ENCODE measurements at regions of chr9 and their contacts with region 1.

Region 1: DNA sequence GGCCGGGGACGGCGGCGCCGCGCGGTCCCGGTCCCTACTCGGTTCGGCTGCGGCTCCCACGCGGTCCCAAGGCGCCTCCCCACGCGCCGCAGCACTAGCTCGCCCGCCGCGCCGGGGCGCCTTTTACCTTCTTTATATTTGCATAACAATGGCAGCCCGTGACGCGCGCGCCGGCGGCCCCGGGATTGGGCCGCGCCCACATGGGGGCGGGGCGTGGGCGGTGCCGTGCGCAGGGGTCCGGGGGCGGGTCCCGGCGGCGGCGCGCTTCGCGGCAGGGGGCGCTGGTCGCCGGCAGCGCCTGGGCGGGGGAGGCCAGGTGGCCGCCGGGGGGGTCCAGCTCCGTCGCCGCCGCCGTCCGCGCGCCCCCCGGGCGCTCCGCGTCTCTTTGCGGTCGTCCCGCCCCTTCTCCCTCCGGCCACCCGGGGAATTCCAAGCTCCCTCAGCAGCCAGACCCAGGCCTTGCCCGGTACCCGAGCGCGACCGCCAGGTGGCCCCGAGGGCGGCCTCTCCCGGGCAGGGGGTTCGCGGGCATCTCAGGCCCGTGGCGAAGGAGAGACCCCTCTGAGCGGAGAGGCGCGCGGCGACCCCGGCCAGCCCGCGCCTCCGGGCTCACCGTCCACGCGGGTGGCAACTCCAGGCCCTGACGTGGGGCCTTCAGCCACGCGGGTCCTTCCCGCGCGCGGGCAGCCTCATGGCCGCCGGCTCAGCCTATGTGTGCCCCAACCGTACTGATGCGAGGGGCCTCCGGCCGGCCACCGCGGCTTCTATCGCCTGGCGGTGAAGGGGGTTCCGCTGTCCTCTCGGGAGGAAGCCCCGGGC is at the start of gene NRARP:
- DNase-seq: peak; percentile 77 to 89
- ATAC-seq: peak; percentile 54 to 61
- H3K4me3 ChIP-seq: peak within 1 kb of the TSS; percentile 49
- H3K27ac ChIP-seq: peak within 1 kb of the TSS; percentile 58 to 90
- H3K4me1 ChIP-seq: peaks cover 19% of the 10 kb centered on the region
- CTCF ChIP-seq: peak; percentile 90
- EP300 ChIP-seq: no peak
- POLR2A ChIP-seq: peak; percentile 97
- RAD21 ChIP-seq: peak; percentile 16 to 40; a peak in 3 of 5 replicates
- polyA plus RNA-seq, gene NRARP: 3.2 and 5.1 TPM in 2 replicates

Region 2: DNA sequence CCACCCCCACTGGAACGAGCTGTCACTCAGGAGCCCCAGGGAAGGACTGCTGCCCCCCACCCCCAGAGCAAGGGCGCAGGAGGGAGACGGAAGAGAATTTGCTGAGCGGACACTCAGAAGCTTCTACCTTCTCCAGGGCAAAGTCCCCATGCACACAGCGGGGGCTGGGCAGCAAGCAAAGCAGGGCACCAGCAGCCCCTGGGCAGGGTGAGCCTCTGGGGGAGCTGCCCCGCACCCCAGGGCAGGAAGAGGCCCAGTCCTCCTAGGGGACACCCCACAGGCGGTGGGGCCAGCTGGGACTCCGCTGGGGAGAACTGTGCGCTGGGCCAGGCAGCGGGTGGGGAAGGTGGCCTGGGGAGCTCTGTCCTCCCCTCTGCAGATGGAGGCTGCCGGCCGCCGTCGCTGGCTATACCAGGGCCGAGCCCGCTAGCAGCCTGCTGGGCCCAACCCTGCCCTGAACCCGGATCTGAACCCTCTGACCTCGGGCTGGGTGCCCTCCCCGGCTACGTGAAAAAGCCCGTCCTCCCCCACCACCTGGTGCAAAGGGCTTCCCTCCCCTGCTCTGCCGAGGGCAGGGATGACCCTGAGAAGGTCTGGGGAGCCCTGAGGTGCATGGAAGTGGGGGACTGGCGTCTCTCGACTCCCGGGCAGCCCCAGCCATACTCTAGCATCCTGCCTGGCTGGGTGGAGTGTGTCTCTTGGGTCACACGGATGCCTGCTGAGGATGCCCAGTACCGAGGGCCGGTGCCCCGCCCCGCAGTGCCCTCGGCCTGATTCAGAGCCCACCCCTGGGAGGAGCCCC is 72.3 kb before region 1 on chr9:
- CTCF ChIA-PET with region 1: no interaction called
- POLR2A ChIA-PET with region 1: no interaction called
- DNase-seq: no peak
- ATAC-seq: peak in 1 of 2 experiments; percentile 23; a peak in 3 of 6 replicates
- H3K4me3 ChIP-seq: no peak overlapping the region
- H3K27ac ChIP-seq: peak overlapping the region in 1 of 2 experiments; percentile 49; a peak in 2 of 6 replicates
- H3K4me1 ChIP-seq: peaks cover 48% of the 10 kb centered on the region
- CTCF ChIP-seq: no peak
- EP300 ChIP-seq: no peak
- POLR2A ChIP-seq: no peak
- RAD21 ChIP-seq: no peak

Region 3: GRCh38 chr9:137277329-137278041 is 24.9 kb before region 1 on chr9 and contains the start of gene TOR4A:
- CTCF ChIA-PET with region 1: interaction called, 13 read pairs
- POLR2A ChIA-PET with region 1: interaction called, 13 read pairs
- DNase-seq: peak; percentile 89 to 92
- ATAC-seq: peak; percentile 79 to 89
- H3K4me3 ChIP-seq: peak within 1 kb of the TSS; percentile 72
- H3K27ac ChIP-seq: peak within 1 kb of the TSS; percentile 94 to 96
- H3K4me1 ChIP-seq: peaks cover 35% of the 10 kb centered on the region
- CTCF ChIP-seq: peak; percentile 33; the same call in 1 of the 3 replicates
- EP300 ChIP-seq: peak in 1 of 2 experiments; percentile 15; a peak in 1 of 5 replicates
- POLR2A ChIP-seq: peak; percentile 56
- RAD21 ChIP-seq: peak in 1 of 2 experiments; percentile 29; a peak in 3 of 5 replicates
- polyA plus RNA-seq, gene TOR4A: 8.7 and 9.8 TPM in 2 replicates

Region 4: GRCh38 chr9:137286975-137287383 is 15.4 kb before region 1 on chr9:
- CTCF ChIA-PET with region 1: interaction called, 14 read pairs
- POLR2A ChIA-PET with region 1: interaction called, 3 read pairs
- DNase-seq: peak; percentile 88 to 94
- ATAC-seq: peak; percentile 99 to 100
- H3K4me3 ChIP-seq: no peak overlapping the region
- H3K27ac ChIP-seq: no peak overlapping the region
- H3K4me1 ChIP-seq: peaks cover 7% of the 10 kb centered on the region; the same call in 1 of the 3 replicates
- CTCF ChIP-seq: peak; percentile 54
- EP300 ChIP-seq: no peak
- POLR2A ChIP-seq: no peak
- RAD21 ChIP-seq: peak; percentile 59 to 86

Region 5: GRCh38 chr9:137316012-137316976 is 13.9 kb after region 1 on chr9:
- CTCF ChIA-PET with region 1: interaction called, 17 read pairs
- POLR2A ChIA-PET with region 1: interaction called, 11 read pairs
- DNase-seq: peak; percentile 75 to 76
- ATAC-seq: peak; percentile 22 to 50; a peak in 4 of 6 replicates
- H3K4me3 ChIP-seq: peak overlapping the region; percentile 45
- H3K27ac ChIP-seq: peak overlapping the region; percentile 88 to 96
- H3K4me1 ChIP-seq: peaks cover 30% of the 10 kb centered on the region
- CTCF ChIP-seq: no peak
- EP300 ChIP-seq: no peak
- POLR2A ChIP-seq: no peak
- RAD21 ChIP-seq: no peak

Region 6: DNA sequence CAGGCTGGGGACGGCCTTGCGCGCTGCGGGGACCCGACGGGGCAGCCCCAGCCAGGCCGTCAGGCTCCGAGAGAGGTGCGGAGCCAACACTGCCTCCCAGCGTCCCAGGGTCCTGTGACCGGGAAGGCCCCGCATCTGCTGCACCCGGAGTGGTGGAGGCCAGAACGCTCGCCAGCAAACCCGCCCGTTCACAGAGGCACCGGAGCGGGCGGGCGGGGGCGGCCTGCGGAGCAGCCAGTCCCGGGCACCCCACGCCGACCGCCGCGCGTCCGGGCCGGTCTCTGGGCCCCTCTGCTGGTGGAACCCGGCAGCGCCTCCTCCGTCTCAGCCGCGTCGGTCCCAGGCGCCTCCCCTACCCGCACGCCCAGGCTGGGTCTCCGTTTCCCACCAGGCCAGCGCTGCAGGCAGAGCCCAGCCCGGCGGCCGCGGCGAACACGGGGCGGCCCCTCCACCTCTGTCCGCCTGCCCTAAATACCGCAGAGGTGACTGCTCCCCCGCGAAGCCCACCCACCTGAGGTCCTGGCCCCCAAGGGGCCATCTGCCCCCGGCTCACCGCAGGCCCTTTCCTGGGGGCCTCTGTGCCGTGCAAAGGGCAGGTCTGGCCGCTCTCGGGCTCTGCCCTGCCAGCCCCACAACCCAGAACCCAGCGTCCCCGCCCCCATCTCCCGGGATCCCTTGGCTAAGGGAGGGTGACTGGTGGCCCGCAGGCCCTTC is 104.6 kb after region 1 on chr9:
- CTCF ChIA-PET with region 1: interaction called, 51 read pairs
- POLR2A ChIA-PET with region 1: interaction called, 13 read pairs
- DNase-seq: peak; percentile 60 to 64
- ATAC-seq: peak; percentile 77 to 90
- H3K4me3 ChIP-seq: peak overlapping the region; percentile 35
- H3K27ac ChIP-seq: peak overlapping the region; percentile 58 to 82; a peak in 5 of 6 replicates
- H3K4me1 ChIP-seq: peaks cover 31% of the 10 kb centered on the region
- CTCF ChIP-seq: peak; percentile 72
- EP300 ChIP-seq: no peak
- POLR2A ChIP-seq: no peak
- RAD21 ChIP-seq: peak; percentile 69 to 87; a peak in 4 of 5 replicates

Region 7: GRCh38 chr9:137445275-137445807 is 143.0 kb after region 1 on chr9:
- CTCF ChIA-PET with region 1: interaction called, 25 read pairs
- POLR2A ChIA-PET with region 1: no interaction called
- DNase-seq: peak; percentile 75 to 77
- ATAC-seq: peak; percentile 63 to 73
- H3K4me3 ChIP-seq: no peak overlapping the region
- H3K27ac ChIP-seq: peak overlapping the region in 1 of 2 experiments; percentile 48; a peak in 1 of 6 replicates
- H3K4me1 ChIP-seq: peaks cover 10% of the 10 kb centered on the region
- CTCF ChIP-seq: peak; percentile 79
- EP300 ChIP-seq: no peak
- POLR2A ChIP-seq: no peak
- RAD21 ChIP-seq: peak; percentile 62 to 66

Region 8: DNA sequence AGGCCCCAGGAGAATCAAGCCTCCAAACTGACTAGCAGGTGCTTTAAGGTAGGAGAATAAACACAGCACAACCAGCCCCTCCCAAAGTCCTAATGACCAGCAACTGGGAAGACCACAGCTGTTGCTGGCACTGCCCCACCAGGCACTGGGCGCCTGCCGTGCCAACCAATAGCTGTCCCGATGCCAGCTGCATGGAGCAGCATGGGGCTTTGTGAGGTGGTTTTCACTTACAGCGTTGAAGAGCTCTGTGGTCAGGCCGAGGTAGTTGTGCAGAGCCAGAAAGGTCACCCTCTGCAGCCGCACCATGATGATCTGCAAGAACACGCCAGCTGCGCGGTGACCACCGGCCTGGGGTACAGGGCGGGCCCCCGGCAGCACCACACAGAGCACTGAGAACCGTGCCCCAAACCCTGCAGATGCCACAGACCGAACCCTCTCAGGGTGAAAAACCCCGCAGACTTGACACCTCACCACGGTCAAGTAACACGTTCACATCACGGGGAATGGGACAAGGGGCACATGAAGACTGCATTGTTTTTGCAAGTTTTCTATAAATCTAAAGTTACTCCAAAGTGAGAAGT is 219.1 kb after region 1 on chr9:
- CTCF ChIA-PET with region 1: interaction called, 12 read pairs
- POLR2A ChIA-PET with region 1: no interaction called
- DNase-seq: no peak
- ATAC-seq: no peak
- H3K4me3 ChIP-seq: no peak overlapping the region
- H3K27ac ChIP-seq: no peak overlapping the region
- H3K4me1 ChIP-seq: no peaks in the 10 kb centered on the region
- CTCF ChIP-seq: no peak
- EP300 ChIP-seq: no peak
- POLR2A ChIP-seq: no peak
- RAD21 ChIP-seq: no peak